Activated CD4-positive, alpha-beta T cell treated with anti-CD3 and anti-CD28 coated beads for 36 hours (primary cell): ENCODE measurements at regions of chr7 and their contacts with region 1.

Region 1: GRCh38 chr7:128862571-128863432 is at the start of gene ATP6V1F:
- DNase-seq: peak; percentile 100
- ATAC-seq: peak; percentile 91
- H3K4me3 Mint-ChIP-seq: peak within 1 kb of the TSS; percentile 77
- H3K27ac Mint-ChIP-seq: peak within 1 kb of the TSS; percentile 90
- H3K4me1 Mint-ChIP-seq: peaks cover 13% of the 10 kb centered on the region
- H3K27me3 Mint-ChIP-seq: no peaks in the 10 kb centered on the region
- total RNA-seq, gene ATP6V1F: 109 to 159 TPM

Region 2: GRCh38 chr7:128409596-128410160 is 453.1 kb before region 1 on chr7 and contains the start of gene IMPDH1:
- CTCF ChIA-PET with region 1: no interaction called
- POLR2A ChIA-PET with region 1: no interaction called
- intact Hi-C with region 1: loop called in 1 of 2 experiments (anchors 2 kb)
- DNase-seq: peak; percentile 92
- ATAC-seq: peak; percentile 85
- H3K4me3 Mint-ChIP-seq: peak within 1 kb of the TSS; percentile 78
- H3K27ac Mint-ChIP-seq: peak within 1 kb of the TSS; percentile 78
- H3K4me1 Mint-ChIP-seq: peaks cover 27% of the 10 kb centered on the region
- H3K27me3 Mint-ChIP-seq: no peaks in the 10 kb centered on the region
- total RNA-seq, gene IMPDH1: 59.0 to 60.7 TPM

Region 3: GRCh38 chr7:128739048-128739962 is 123.5 kb before region 1 on chr7 and contains the start of gene CALU:
- CTCF ChIA-PET with region 1: interaction called, 4 read pairs
- POLR2A ChIA-PET with region 1: no interaction called
- intact Hi-C with region 1: loop called (anchors 1 to 2 kb)
- DNase-seq: peak; percentile 97
- ATAC-seq: peak; percentile 98
- H3K4me3 Mint-ChIP-seq: peak within 1 kb of the TSS; percentile 99
- H3K27ac Mint-ChIP-seq: peak within 1 kb of the TSS; percentile 93
- H3K4me1 Mint-ChIP-seq: peaks cover 38% of the 10 kb centered on the region
- H3K27me3 Mint-ChIP-seq: peaks cover 3% of the 10 kb centered on the region
- total RNA-seq, gene CALU: 32.9 to 33.8 TPM

Region 4: GRCh38 chr7:128883622-128884501 is 21.1 kb after region 1 on chr7:
- CTCF ChIA-PET with region 1: interaction called, 49 read pairs
- POLR2A ChIA-PET with region 1: interaction called, 3 read pairs
- intact Hi-C with region 1: loop called (anchors 1 kb)
- DNase-seq: peak; percentile 92
- ATAC-seq: peak; percentile 82
- H3K4me3 Mint-ChIP-seq: no peak overlapping the region
- H3K27ac Mint-ChIP-seq: no peak overlapping the region
- H3K4me1 Mint-ChIP-seq: no peaks in the 10 kb centered on the region
- H3K27me3 Mint-ChIP-seq: peaks cover 2% of the 10 kb centered on the region

Region 5: GRCh38 chr7:129054438-129055293 is 191.9 kb after region 1 on chr7 and contains the start of gene TNPO3:
- CTCF ChIA-PET with region 1: interaction called, 3 read pairs
- POLR2A ChIA-PET with region 1: no interaction called
- intact Hi-C with region 1: loop called in 1 of 2 experiments (anchors 1 kb)
- DNase-seq: peak; percentile 94
- ATAC-seq: peak; percentile 91
- H3K4me3 Mint-ChIP-seq: peak within 1 kb of the TSS; percentile 89
- H3K27ac Mint-ChIP-seq: peak within 1 kb of the TSS; percentile 99
- H3K4me1 Mint-ChIP-seq: peaks cover 28% of the 10 kb centered on the region
- H3K27me3 Mint-ChIP-seq: peaks cover 3% of the 10 kb centered on the region
- total RNA-seq, gene TNPO3: 57.7 to 60.5 TPM